Panc1 (cell line): ENCODE measurements at regions of chr20 and their contacts with region 1.

Region 1: GRCh38 chr20:32521780-32522525 is 63.2 kb downstream of the NOL4L start:
- DNase-seq: peak; percentile 30
- ATAC-seq: peak; percentile 93
- H3K4me3 ChIP-seq: no peak overlapping the region
- H3K27ac ChIP-seq: no peak overlapping the region
- H3K4me1 ChIP-seq: no peaks in the 10 kb centered on the region
- H3K27me3 ChIP-seq: no peaks in the 10 kb centered on the region
- CTCF ChIP-seq: peak; percentile 88

Region 2: DNA sequence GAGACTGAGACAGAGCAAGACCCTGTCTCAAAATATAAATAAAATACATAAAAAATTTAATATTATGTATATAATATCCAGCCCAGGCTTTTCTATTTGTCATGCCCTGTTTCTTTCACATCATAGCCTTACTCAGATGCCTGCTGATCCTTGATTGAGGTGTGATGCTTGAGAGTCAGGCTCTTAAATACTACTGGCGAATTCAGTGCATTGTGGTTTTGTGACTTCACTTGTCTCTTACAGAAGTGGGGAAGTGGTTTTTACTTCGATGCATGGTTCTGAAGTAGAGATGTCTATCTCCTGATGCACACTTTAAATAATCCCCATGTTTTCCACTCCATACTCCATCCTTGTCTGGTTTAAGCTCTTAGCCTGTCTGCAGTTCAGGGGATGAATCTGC is 134.7 kb before region 1 on chr20:
- CTCF ChIA-PET with region 1: no interaction called
- POLR2A ChIA-PET with region 1: no interaction called
- in situ Hi-C with region 1: no loop called
- intact Hi-C with region 1: no loop called
- DNase-seq: no peak
- ATAC-seq: no peak
- H3K4me3 ChIP-seq: no peak overlapping the region
- H3K27ac ChIP-seq: no peak overlapping the region
- H3K4me1 ChIP-seq: peaks cover 14% of the 10 kb centered on the region
- H3K27me3 ChIP-seq: no peaks in the 10 kb centered on the region
- CTCF ChIP-seq: no peak

Region 3: DNA sequence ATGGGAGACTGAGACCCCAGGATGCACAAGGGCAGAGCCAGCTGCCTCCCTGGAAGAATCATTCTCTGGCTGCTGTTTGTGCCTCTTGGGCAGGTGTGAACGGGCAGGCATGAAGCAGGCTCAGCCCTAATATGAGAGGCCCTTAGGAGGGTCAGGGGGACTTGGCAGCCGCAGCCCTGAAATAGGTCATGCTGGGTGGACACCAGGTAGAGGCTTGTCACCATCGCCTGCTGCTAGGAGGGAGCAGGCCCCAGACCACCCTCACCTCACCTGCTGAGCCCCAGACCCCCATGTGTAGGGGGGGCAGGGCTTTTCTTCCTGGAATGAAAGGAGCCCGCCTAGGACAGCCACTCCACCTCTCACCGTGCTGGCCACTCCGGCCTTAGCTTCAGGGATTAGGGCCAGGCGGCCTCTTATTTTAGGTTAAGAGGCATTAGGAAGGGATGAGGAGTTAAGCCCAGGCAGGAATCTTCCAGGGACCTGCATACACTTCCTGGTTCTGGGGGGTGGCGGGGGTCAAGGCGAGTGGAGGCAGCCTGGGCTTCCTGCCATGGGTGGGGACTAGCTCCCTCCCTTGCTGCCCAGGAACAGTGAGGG is 71.4 kb before region 1 on chr20:
- CTCF ChIA-PET with region 1: interaction called, 19 read pairs
- POLR2A ChIA-PET with region 1: no interaction called
- in situ Hi-C with region 1: no loop called
- intact Hi-C with region 1: no loop called
- DNase-seq: no peak
- ATAC-seq: no peak
- H3K4me3 ChIP-seq: no peak overlapping the region
- H3K27ac ChIP-seq: no peak overlapping the region
- H3K4me1 ChIP-seq: peaks cover 15% of the 10 kb centered on the region
- H3K27me3 ChIP-seq: no peaks in the 10 kb centered on the region
- CTCF ChIP-seq: no peak

Region 4: GRCh38 chr20:32497589-32498224 is 24.2 kb before region 1 on chr20:
- CTCF ChIA-PET with region 1: interaction called, 11 read pairs
- POLR2A ChIA-PET with region 1: no interaction called
- in situ Hi-C with region 1: no loop called
- intact Hi-C with region 1: no loop called
- DNase-seq: no peak
- ATAC-seq: no peak
- H3K4me3 ChIP-seq: no peak overlapping the region
- H3K27ac ChIP-seq: no peak overlapping the region
- H3K4me1 ChIP-seq: no peaks in the 10 kb centered on the region
- H3K27me3 ChIP-seq: no peaks in the 10 kb centered on the region
- CTCF ChIP-seq: no peak

Region 5: DNA sequence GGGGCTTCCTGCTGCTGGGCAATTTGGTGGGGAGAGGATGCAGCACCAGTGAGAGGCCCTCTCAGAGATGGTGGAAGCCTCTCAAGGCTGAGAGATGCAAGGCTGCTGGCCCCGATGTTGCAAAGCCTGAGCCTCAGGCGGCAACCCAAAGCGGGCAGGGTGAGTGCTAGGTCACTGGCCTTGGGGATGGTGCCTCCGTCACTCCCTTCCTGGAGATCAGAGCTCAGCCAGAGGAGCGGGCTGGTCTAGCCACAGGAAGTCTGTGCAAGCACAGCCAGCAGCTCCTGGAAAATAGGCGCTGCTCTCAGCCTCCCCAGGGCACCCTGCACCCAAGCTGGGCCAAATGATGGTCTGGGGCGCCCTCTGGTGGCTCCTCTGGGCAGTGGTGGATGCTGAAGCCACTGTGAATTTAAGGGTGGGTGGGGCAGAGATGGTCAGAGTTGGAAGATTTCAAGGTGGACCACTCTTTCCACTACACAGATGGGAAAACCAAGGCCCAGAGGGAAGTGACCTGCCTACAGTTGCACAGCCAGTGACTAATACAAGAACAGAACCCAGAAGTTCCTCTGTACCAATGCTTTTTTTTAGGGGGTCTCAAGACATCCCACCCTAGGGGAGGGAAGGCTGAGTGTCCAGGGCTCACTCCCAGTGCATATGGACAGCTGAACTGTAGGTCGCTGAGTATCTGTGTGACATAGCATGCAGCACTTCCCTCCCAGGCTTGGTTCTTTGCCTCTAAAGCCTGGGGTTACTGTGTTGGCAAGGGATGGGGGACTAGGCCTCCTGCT is 131.0 kb after region 1 on chr20:
- CTCF ChIA-PET with region 1: interaction called, 25 read pairs
- POLR2A ChIA-PET with region 1: no interaction called
- in situ Hi-C with region 1: no loop called
- intact Hi-C with region 1: loop called (anchors 1 kb)
- DNase-seq: peak; percentile 20
- ATAC-seq: peak; percentile 98
- H3K4me3 ChIP-seq: no peak overlapping the region
- H3K27ac ChIP-seq: no peak overlapping the region
- H3K4me1 ChIP-seq: 0 out of 2 replicates have a peak, but pooled peaks cover 2% of the 10 kb centered on the region
- H3K27me3 ChIP-seq: no peaks in the 10 kb centered on the region
- CTCF ChIP-seq: peak; percentile 90

Region 6: DNA sequence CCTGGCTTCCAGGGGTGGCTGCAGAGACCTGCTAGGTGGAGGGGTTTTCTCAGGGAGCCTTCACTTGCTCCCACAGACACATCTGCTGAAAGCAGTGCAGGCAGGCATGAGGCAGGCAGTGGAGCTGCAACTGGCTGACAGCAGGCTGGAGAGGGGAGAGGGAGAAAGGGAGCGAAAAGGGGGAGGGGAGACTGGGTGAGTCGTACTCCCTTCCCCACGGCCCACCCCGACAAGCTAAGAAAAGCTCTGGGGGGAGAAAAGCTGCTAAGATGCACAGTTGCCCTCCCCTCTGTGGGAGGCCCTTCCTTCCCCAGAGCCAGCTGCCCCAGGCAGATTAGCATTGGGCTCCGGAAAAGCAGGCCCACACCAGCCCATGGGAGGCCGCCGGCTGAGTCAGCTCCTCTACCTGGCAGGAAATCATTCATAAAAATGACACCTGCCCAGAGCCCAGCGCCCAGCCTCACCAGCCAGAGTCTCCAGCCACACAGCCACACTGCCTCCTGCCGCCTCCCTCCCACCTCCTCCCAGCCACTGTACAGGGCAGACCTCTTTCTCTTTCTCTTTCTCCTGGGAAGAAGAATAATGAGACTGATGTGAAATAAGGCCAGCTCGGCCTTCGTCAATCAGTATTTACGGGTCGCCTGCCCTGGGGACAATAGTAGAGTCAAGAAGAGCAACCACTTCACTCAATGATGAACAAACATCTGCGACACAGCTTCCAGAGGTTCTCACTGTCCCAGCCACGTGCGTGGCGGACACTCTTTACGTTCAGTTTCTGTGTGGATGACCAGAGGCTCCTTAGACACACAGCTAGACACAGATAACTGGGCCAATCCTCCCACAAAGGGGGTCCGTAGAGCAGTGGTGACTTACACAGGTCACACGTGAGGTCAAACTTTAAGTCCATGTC is 159.5 kb after region 1 on chr20:
- CTCF ChIA-PET with region 1: no interaction called
- POLR2A ChIA-PET with region 1: no interaction called
- in situ Hi-C with region 1: no loop called
- intact Hi-C with region 1: no loop called
- DNase-seq: no peak
- ATAC-seq: peak; percentile 60
- H3K4me3 ChIP-seq: no peak overlapping the region
- H3K27ac ChIP-seq: no peak overlapping the region
- H3K4me1 ChIP-seq: 0 out of 2 replicates have a peak, but pooled peaks cover 4% of the 10 kb centered on the region
- H3K27me3 ChIP-seq: no peaks in the 10 kb centered on the region
- CTCF ChIP-seq: no peak